CD8-positive, alpha-beta T cell (primary cell): ENCODE measurements at regions of chr7 and their contacts with region 1.

Region 1: DNA sequence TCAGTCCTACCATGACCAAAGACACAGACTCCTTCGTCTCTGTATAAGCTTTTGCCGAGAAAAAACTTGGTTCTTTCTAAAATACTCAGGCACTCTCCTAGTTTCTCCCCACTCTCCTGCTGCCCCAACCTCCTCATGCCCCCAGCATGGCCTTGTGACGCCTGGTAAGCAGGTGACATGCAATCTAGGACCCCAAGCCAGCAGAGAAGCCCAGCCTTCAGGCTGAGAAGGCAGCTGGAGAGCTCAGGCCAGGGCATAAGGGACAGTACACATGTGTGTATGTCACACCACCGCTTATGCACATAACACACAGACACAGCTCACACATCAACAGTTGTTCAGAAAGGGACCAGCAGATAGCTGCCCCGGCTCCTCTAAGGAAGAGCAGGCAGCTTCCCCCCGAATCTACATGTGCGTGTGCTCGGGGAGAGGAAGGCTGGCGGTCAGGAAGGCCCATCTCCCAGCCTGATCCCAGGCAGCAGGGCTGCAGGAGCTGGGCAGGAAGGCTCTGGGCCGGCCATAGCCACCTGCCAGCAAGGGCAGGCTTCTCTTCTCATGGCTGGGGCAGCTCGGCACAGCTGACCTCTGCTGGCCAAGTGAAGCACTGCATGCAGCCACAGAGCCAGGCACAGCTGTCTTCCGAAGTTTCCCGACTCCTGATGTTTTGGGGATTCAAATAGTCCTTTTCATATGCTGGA is 8.5 kb downstream of the DDX56 start:
- DNase-seq: peak; percentile 40 to 78 (median 65)
- ATAC-seq: peak; percentile 97
- H3K4me3 ChIP-seq: no peak overlapping the region
- H3K4me3 Mint-ChIP-seq: no peak overlapping the region
- H3K27ac ChIP-seq: no peak overlapping the region
- H3K27ac Mint-ChIP-seq: no peak overlapping the region
- H3K4me1 ChIP-seq: no peaks in the 10 kb centered on the region
- H3K4me1 Mint-ChIP-seq: peaks cover 10% of the 10 kb centered on the region
- H3K27me3 ChIP-seq: no peaks in the 10 kb centered on the region
- H3K27me3 Mint-ChIP-seq: no peaks in the 10 kb centered on the region
- CTCF ChIP-seq: peak; percentile 93

Region 2: GRCh38 chr7:44348300-44348699 is 216.9 kb before region 1 on chr7:
- CTCF ChIA-PET with region 1: interaction called, 20 read pairs
- POLR2A ChIA-PET with region 1: no interaction called
- intact Hi-C with region 1: no loop called
- DNase-seq: peak in 2 of 9 experiments; percentile 28 to 37
- ATAC-seq: no peak
- H3K4me3 ChIP-seq: no peak overlapping the region
- H3K4me3 Mint-ChIP-seq: no peak overlapping the region
- H3K27ac ChIP-seq: no peak overlapping the region
- H3K27ac Mint-ChIP-seq: no peak overlapping the region
- H3K4me1 ChIP-seq: no peaks in the 10 kb centered on the region
- H3K4me1 Mint-ChIP-seq: no peaks in the 10 kb centered on the region
- H3K27me3 ChIP-seq: no peaks in the 10 kb centered on the region
- H3K27me3 Mint-ChIP-seq: peaks cover 6% of the 10 kb centered on the region
- CTCF ChIP-seq: no peak

Region 3: GRCh38 chr7:44811086-44811485 is 245.8 kb after region 1 on chr7:
- CTCF ChIA-PET with region 1: no interaction called
- POLR2A ChIA-PET with region 1: no interaction called
- intact Hi-C with region 1: no loop called
- DNase-seq: no peak
- ATAC-seq: no peak
- H3K4me3 ChIP-seq: no peak overlapping the region
- H3K4me3 Mint-ChIP-seq: no peak overlapping the region
- H3K27ac ChIP-seq: no peak overlapping the region
- H3K27ac Mint-ChIP-seq: no peak overlapping the region
- H3K4me1 ChIP-seq: no peaks in the 10 kb centered on the region
- H3K4me1 Mint-ChIP-seq: no peaks in the 10 kb centered on the region
- H3K27me3 ChIP-seq: no peaks in the 10 kb centered on the region
- H3K27me3 Mint-ChIP-seq: no peaks in the 10 kb centered on the region
- CTCF ChIP-seq: no peak